T-cell (primary cell): ENCODE measurements at regions of chr18 and their contacts with region 1.

Region 1: DNA sequence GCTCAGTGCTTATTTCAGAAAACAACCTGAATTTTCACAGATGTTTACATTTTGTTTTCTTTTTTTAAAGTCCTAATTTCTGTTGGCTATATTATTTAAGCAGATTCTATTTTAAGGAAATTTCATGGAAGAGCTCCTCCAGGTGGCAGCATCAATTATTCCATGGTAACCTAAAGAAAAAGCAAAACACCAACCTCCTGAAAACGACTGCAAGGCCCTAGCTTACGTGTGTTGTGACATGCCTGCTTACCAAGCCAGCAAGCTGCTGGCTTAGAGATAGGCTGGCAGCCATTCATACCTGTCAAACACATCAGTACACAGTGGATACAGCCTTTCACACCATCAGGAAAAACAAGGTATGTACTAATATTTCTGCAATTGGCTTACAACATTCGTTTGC is 64.9 kb downstream of the LPIN2 start:
- DNase-seq: peak in 1 of 35 experiments; percentile 30
- ATAC-seq: peak in 1 of 4 experiments; percentile 35
- H3K4me3 ChIP-seq: no peak overlapping the region
- H3K4me3 Mint-ChIP-seq: no peak overlapping the region
- H3K27ac ChIP-seq: no peak overlapping the region
- H3K27ac Mint-ChIP-seq: peak overlapping the region in 1 of 2 donors; percentile 39
- H3K4me1 ChIP-seq: peaks cover 9 to 16% of the 10 kb centered on the region in 2 experiments
- H3K4me1 Mint-ChIP-seq: peaks cover 54 to 65% (median 64%) of the 10 kb centered on the region in 3 donors
- H3K27me3 ChIP-seq: no peaks in the 10 kb centered on the region
- H3K27me3 Mint-ChIP-seq: no peaks in the 10 kb centered on the region

Region 2: GRCh38 chr18:2903006-2903405 is 45.0 kb before region 1 on chr18:
- CTCF ChIA-PET with region 1: no interaction called
- POLR2A ChIA-PET with region 1: interaction called in 1 of 2 experiments, 10 read pairs
- DNase-seq: no peak
- ATAC-seq: no peak
- H3K4me3 ChIP-seq: no peak overlapping the region
- H3K4me3 Mint-ChIP-seq: no peak overlapping the region
- H3K27ac ChIP-seq: no peak overlapping the region
- H3K27ac Mint-ChIP-seq: no peak overlapping the region
- H3K4me1 ChIP-seq: peaks cover 7 to 20% of the 10 kb centered on the region in 2 experiments
- H3K4me1 Mint-ChIP-seq: peaks cover 17 to 22% (median 19%) of the 10 kb centered on the region in 3 donors
- H3K27me3 ChIP-seq: no peaks in the 10 kb centered on the region
- H3K27me3 Mint-ChIP-seq: no peaks in the 10 kb centered on the region

Region 3: GRCh38 chr18:2958819-2959298 is 10.8 kb after region 1 on chr18:
- CTCF ChIA-PET with region 1: interaction called in 1 of 2 experiments, 9 read pairs
- POLR2A ChIA-PET with region 1: interaction called, 10 to 19 read pairs
- DNase-seq: peak in 1 of 35 experiments; percentile 53
- ATAC-seq: peak in 1 of 4 experiments; percentile 18
- H3K4me3 ChIP-seq: no peak overlapping the region
- H3K4me3 Mint-ChIP-seq: peak overlapping the region; percentile 46 to 72 (median 62)
- H3K27ac ChIP-seq: peak overlapping the region; percentile 94
- H3K27ac Mint-ChIP-seq: peak overlapping the region; percentile 95
- H3K4me1 ChIP-seq: peaks cover 67 to 77% of the 10 kb centered on the region in 2 experiments
- H3K4me1 Mint-ChIP-seq: peaks cover 91 to 95% (median 94%) of the 10 kb centered on the region in 3 donors
- H3K27me3 ChIP-seq: no peaks in the 10 kb centered on the region
- H3K27me3 Mint-ChIP-seq: no peaks in the 10 kb centered on the region

Region 4: GRCh38 chr18:2985628-2986027 is 37.6 kb after region 1 on chr18:
- CTCF ChIA-PET with region 1: interaction called, 9 to 55 read pairs
- POLR2A ChIA-PET with region 1: interaction called, 4 read pairs
- DNase-seq: peak in 6 of 35 experiments; percentile 17 to 77 (median 32)
- ATAC-seq: peak; percentile 57 to 67 (median 60)
- H3K4me3 ChIP-seq: no peak overlapping the region
- H3K4me3 Mint-ChIP-seq: peak overlapping the region in 1 of 3 donors; percentile 7
- H3K27ac ChIP-seq: no peak overlapping the region
- H3K27ac Mint-ChIP-seq: peak overlapping the region; percentile 44 to 89
- H3K4me1 ChIP-seq: peaks cover 18 to 38% of the 10 kb centered on the region in 2 experiments
- H3K4me1 Mint-ChIP-seq: peaks cover 59 to 80% (median 69%) of the 10 kb centered on the region in 3 donors
- H3K27me3 ChIP-seq: no peaks in the 10 kb centered on the region
- H3K27me3 Mint-ChIP-seq: no peaks in the 10 kb centered on the region

Region 5: DNA sequence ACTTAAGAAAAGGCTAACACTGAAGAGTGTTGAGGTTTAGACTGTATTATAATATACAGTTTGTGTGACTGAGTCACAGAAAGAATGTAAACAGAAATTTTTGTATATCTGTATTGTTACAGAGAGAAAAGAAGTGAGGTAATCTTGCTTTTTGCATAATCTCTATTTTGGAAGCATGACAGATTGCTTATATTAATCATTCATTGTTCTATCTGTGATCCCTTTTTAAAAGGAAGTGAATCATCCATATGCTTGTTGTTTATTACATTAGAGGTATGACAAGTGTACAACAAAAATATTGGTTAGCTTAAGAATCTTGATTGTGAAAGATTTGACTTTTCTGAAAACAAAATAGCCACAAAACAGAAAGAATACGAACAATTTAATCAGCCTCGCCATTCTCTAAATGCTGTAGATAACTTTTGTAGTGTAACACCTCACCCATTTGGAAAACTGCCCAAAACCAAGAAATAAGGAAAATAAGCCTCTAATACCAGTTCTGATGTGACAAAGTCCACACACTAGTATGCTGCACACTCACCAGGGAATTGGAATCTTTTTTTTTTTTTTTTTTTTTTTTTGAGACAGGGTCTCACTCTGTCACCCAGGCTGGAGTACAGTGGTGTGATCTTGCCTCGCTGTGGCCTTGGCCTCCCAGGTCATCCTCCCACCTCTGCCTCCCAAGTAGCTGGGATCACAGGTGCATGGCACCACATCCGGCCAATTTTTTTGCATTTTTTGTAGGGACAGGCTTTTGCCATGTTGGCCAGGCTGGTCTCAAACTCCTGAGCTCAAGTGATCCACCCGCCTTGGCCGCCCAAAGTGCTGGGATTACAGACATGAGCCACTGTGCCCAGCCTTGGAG is 156.4 kb after region 1 on chr18:
- CTCF ChIA-PET with region 1: no interaction called
- POLR2A ChIA-PET with region 1: no interaction called
- DNase-seq: no peak
- ATAC-seq: no peak
- H3K4me3 ChIP-seq: no peak overlapping the region
- H3K4me3 Mint-ChIP-seq: no peak overlapping the region
- H3K27ac ChIP-seq: no peak overlapping the region
- H3K27ac Mint-ChIP-seq: no peak overlapping the region
- H3K4me1 ChIP-seq: no peaks in the 10 kb centered on the region
- H3K4me1 Mint-ChIP-seq: peaks cover 3 to 6% (median 3%) of the 10 kb centered on the region in 3 donors
- H3K27me3 ChIP-seq: no peaks in the 10 kb centered on the region
- H3K27me3 Mint-ChIP-seq: no peaks in the 10 kb centered on the region

Region 6: GRCh38 chr18:3129053-3129864 is 181.2 kb after region 1 on chr18:
- CTCF ChIA-PET with region 1: interaction called, 4 to 12 read pairs
- POLR2A ChIA-PET with region 1: no interaction called
- DNase-seq: peak; percentile 59 to 88 (median 77)
- ATAC-seq: peak; percentile 95 to 99 (median 98)
- H3K4me3 ChIP-seq: no peak overlapping the region
- H3K4me3 Mint-ChIP-seq: no peak overlapping the region
- H3K27ac ChIP-seq: no peak overlapping the region
- H3K27ac Mint-ChIP-seq: no peak overlapping the region
- H3K4me1 ChIP-seq: peaks cover 0 to 5% of the 10 kb centered on the region in 2 experiments
- H3K4me1 Mint-ChIP-seq: peaks cover 5 to 9% (median 8%) of the 10 kb centered on the region in 3 donors
- H3K27me3 ChIP-seq: no peaks in the 10 kb centered on the region
- H3K27me3 Mint-ChIP-seq: no peaks in the 10 kb centered on the region

Region 7: GRCh38 chr18:3526421-3527354 is 578.6 kb after region 1 on chr18:
- CTCF ChIA-PET with region 1: interaction called in 1 of 2 experiments, 13 read pairs
- POLR2A ChIA-PET with region 1: no interaction called
- DNase-seq: peak in 1 of 35 experiments; percentile 4
- ATAC-seq: no peak
- H3K4me3 ChIP-seq: no peak overlapping the region
- H3K4me3 Mint-ChIP-seq: peak overlapping the region; percentile 44 to 58 (median 56)
- H3K27ac ChIP-seq: no peak overlapping the region
- H3K27ac Mint-ChIP-seq: no peak overlapping the region
- H3K4me1 ChIP-seq: peaks cover 0 to 16% of the 10 kb centered on the region in 2 experiments
- H3K4me1 Mint-ChIP-seq: peaks cover 14 to 16% (median 15%) of the 10 kb centered on the region in 3 donors
- H3K27me3 ChIP-seq: no peaks in the 10 kb centered on the region
- H3K27me3 Mint-ChIP-seq: no peaks in the 10 kb centered on the region

Region 8: DNA sequence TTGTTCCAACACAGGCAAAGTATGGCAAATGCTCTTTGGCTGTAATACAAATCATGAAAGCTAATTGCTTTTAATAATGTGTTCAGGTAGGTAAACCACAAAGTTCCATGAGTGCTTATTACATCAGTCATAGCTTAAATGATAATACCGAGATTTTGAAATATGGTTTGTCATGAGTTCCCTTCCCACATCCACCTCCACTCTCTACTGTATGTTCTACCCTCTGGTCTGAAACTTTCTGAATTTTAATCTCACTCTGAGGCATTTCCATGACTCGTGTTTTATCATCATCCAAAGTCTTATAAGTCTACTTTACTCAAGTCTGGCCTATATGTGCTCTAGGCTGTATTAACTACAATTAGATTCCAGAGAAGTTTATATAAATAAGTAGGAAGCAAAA is 1894.2 kb after region 1 on chr18:
- CTCF ChIA-PET with region 1: no interaction called
- POLR2A ChIA-PET with region 1: no interaction called
- DNase-seq: no peak
- ATAC-seq: no peak
- H3K4me3 ChIP-seq: no peak overlapping the region
- H3K4me3 Mint-ChIP-seq: no peak overlapping the region
- H3K27ac ChIP-seq: no peak overlapping the region
- H3K27ac Mint-ChIP-seq: no peak overlapping the region
- H3K4me1 ChIP-seq: no peaks in the 10 kb centered on the region
- H3K4me1 Mint-ChIP-seq: no peaks in the 10 kb centered on the region
- H3K27me3 ChIP-seq: no peaks in the 10 kb centered on the region
- H3K27me3 Mint-ChIP-seq: no peaks in the 10 kb centered on the region